CD8-positive, alpha-beta T cell (primary cell): ENCODE measurements at regions of chr1 and their contacts with region 1.

Region 1: GRCh38 chr1:40404670-40405462 is 31.3 kb downstream of the SMAP2 start:
- DNase-seq: peak in 5 of 9 experiments; percentile 45 to 88 (median 59)
- ATAC-seq: peak; percentile 81
- H3K4me3 ChIP-seq: no peak overlapping the region
- H3K4me3 Mint-ChIP-seq: peak overlapping the region; percentile 55
- H3K27ac ChIP-seq: peak overlapping the region; percentile 59 to 84
- H3K27ac Mint-ChIP-seq: peak overlapping the region; percentile 96
- H3K4me1 ChIP-seq: peaks cover 56% of the 10 kb centered on the region
- H3K4me1 Mint-ChIP-seq: peaks cover 77% of the 10 kb centered on the region
- H3K27me3 ChIP-seq: no peaks in the 10 kb centered on the region
- H3K27me3 Mint-ChIP-seq: no peaks in the 10 kb centered on the region
- CTCF ChIP-seq: peak; percentile 79

Region 2: GRCh38 chr1:40143891-40144575 is 260.8 kb before region 1 on chr1:
- CTCF ChIA-PET with region 1: interaction called, 18 read pairs
- POLR2A ChIA-PET with region 1: interaction called, 3 read pairs
- intact Hi-C with region 1: loop called in 1 of 2 experiments (anchors 2 kb)
- DNase-seq: peak; percentile 10 to 82 (median 51)
- ATAC-seq: peak; percentile 74
- H3K4me3 ChIP-seq: no peak overlapping the region
- H3K4me3 Mint-ChIP-seq: no peak overlapping the region
- H3K27ac ChIP-seq: no peak overlapping the region
- H3K27ac Mint-ChIP-seq: no peak overlapping the region
- H3K4me1 ChIP-seq: peaks cover 3% of the 10 kb centered on the region
- H3K4me1 Mint-ChIP-seq: peaks cover 6% of the 10 kb centered on the region
- H3K27me3 ChIP-seq: no peaks in the 10 kb centered on the region
- H3K27me3 Mint-ChIP-seq: peaks cover 20% of the 10 kb centered on the region
- CTCF ChIP-seq: peak; percentile 73

Region 3: GRCh38 chr1:40257688-40258444 is 147.0 kb before region 1 on chr1 and contains the start of gene ZMPSTE24:
- CTCF ChIA-PET with region 1: no interaction called
- POLR2A ChIA-PET with region 1: no interaction called
- intact Hi-C with region 1: loop called in 1 of 2 experiments (anchors 5 kb)
- DNase-seq: peak; percentile 92 to 99 (median 95)
- ATAC-seq: peak; percentile 95
- H3K4me3 ChIP-seq: peak within 1 kb of the TSS; percentile 95 to 98
- H3K4me3 Mint-ChIP-seq: peak within 1 kb of the TSS; percentile 98
- H3K27ac ChIP-seq: peak within 1 kb of the TSS; percentile 88 to 99
- H3K27ac Mint-ChIP-seq: peak within 1 kb of the TSS; percentile 100
- H3K4me1 ChIP-seq: peaks cover 20% of the 10 kb centered on the region
- H3K4me1 Mint-ChIP-seq: peaks cover 56% of the 10 kb centered on the region
- H3K27me3 ChIP-seq: no peaks in the 10 kb centered on the region
- H3K27me3 Mint-ChIP-seq: no peaks in the 10 kb centered on the region
- CTCF ChIP-seq: no peak
- total RNA-seq, gene ZMPSTE24: 11.5 to 12.2 TPM

Region 4: DNA sequence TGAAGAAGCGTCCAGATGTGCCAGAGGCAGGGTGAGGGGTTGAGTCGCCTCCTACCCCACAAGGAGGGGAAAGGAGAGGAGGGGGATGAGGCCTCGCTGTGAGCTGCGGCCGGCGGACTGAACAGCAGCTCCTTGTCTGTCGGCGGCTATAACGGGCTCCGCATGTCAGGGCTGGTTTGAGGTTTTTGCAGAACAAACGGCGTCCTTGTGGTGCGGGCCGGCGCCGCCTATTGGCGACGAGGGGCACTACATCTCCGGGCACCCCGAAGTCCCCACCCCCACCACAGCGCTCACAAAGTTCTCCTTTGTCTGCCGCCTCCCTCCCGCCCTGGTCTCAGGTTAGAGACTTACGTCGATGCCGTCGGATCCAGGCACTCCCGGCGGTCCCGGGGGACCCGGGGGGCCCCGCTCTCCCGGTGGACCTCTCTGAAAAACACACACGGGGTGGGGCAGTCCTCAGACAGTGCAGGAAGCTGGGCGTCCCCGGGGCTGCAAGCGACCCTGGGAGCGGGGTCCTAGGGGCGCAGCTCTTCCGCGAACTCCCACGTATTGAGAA is 89.5 kb before region 1 on chr1:
- CTCF ChIA-PET with region 1: interaction called, 22 read pairs
- POLR2A ChIA-PET with region 1: no interaction called
- intact Hi-C with region 1: loop called in 1 of 2 experiments (anchors 2 kb)
- DNase-seq: peak; percentile 71 to 92 (median 85)
- ATAC-seq: peak; percentile 81
- H3K4me3 ChIP-seq: peak overlapping the region; percentile 54 to 84
- H3K4me3 Mint-ChIP-seq: peak overlapping the region; percentile 84
- H3K27ac ChIP-seq: peak overlapping the region in 1 of 2 experiments; percentile 24
- H3K27ac Mint-ChIP-seq: peak overlapping the region; percentile 29
- H3K4me1 ChIP-seq: peaks cover 14% of the 10 kb centered on the region
- H3K4me1 Mint-ChIP-seq: peaks cover 27% of the 10 kb centered on the region
- H3K27me3 ChIP-seq: peaks cover 0 to 13% of the 10 kb centered on the region in 2 experiments
- H3K27me3 Mint-ChIP-seq: peaks cover 7% of the 10 kb centered on the region
- CTCF ChIP-seq: peak; percentile 95

Region 5: GRCh38 chr1:40385437-40386358 is 19.2 kb before region 1 on chr1:
- CTCF ChIA-PET with region 1: interaction called, 53 read pairs
- POLR2A ChIA-PET with region 1: interaction called, 13 read pairs
- intact Hi-C with region 1: loop called (anchors 1 to 2 kb)
- DNase-seq: peak in 7 of 9 experiments; percentile 34 to 96 (median 64)
- ATAC-seq: peak; percentile 66
- H3K4me3 ChIP-seq: peak overlapping the region; percentile 29 to 50
- H3K4me3 Mint-ChIP-seq: peak overlapping the region; percentile 86
- H3K27ac ChIP-seq: peak overlapping the region; percentile 93 to 97
- H3K27ac Mint-ChIP-seq: peak overlapping the region; percentile 100
- H3K4me1 ChIP-seq: peaks cover 82% of the 10 kb centered on the region
- H3K4me1 Mint-ChIP-seq: peaks cover 92% of the 10 kb centered on the region
- H3K27me3 ChIP-seq: no peaks in the 10 kb centered on the region
- H3K27me3 Mint-ChIP-seq: no peaks in the 10 kb centered on the region
- CTCF ChIP-seq: no peak